Sigmoid colon (tissue), 7 donors: ENCODE measurements at regions of chr17 and their contacts with region 1.

Region 1: GRCh38 chr17:2244545-2245525 is 58.8 kb downstream of the SMG6 start:
- DNase-seq: peak; percentile 94
- H3K4me3 ChIP-seq: no peak overlapping the region
- H3K27ac ChIP-seq: peak overlapping the region; percentile 63 to 75 (median 68)
- H3K4me1 ChIP-seq: peaks cover 0 to 17% (median 16%) of the 10 kb centered on the region in 4 donors
- H3K27me3 ChIP-seq: no peaks in the 10 kb centered on the region
- CTCF ChIP-seq: peak; percentile 96 to 98 (median 97)
- EP300 ChIP-seq: no peak
- POLR2A ChIP-seq: no peak

Region 2: GRCh38 chr17:2094891-2095535 is 149.8 kb before region 1 on chr17:
- intact Hi-C with region 1: loop called (anchors 1 kb)
- DNase-seq: peak; percentile 81
- H3K4me3 ChIP-seq: no peak overlapping the region
- H3K27ac ChIP-seq: peak overlapping the region in 3 of 4 donors; percentile 24 to 51 (median 29)
- H3K4me1 ChIP-seq: peaks cover 0 to 29% (median 21%) of the 10 kb centered on the region in 4 donors
- H3K27me3 ChIP-seq: no peaks in the 10 kb centered on the region
- CTCF ChIP-seq: peak; percentile 55 to 68 (median 65)
- EP300 ChIP-seq: no peak
- POLR2A ChIP-seq: no peak